GM12878 (cell line): ENCODE measurements at regions of chr5 and their contacts with region 1.

Region 1: DNA sequence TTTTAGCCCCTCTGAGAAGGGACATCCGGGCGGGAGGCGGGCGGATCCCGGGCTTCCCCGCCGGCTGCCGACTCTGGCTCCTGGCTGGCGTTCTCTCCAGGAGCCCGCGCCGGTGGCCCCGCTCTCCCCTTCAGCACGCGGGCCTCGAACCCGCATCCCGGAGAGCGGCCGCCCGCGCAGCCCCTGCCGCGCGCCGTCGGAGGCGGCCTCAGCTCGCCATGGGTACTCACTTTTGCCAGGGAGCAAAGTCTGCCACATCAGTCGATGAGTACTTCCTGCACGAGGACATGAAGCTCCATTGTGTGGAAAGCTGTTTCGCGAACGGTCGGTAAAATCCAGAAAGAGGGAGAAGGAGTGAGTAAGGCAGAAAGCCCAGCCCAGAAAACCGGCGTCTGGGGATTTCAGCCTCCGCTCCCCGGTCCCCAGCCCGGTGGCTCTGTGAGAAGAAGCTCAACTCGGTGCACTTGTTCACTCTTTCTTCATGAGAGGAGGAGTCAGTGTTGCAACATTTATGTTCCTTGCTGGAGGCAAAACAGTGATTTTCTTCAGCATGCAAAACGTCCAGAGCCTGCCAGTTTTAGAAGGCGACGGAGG is at the start of gene PRLR:
- DNase-seq: no peak
- ATAC-seq: peak; percentile 38
- H3K4me3 ChIP-seq: peak within 1 kb of the TSS; percentile 64
- H3K27ac ChIP-seq: peak within 1 kb of the TSS; percentile 25; the same call in 1 of the 2 replicates
- H3K4me1 ChIP-seq: no peaks in the 10 kb centered on the region
- H3K27me3 ChIP-seq: peaks cover 0 to 8% of the 10 kb centered on the region in 2 experiments; a peak in 2 of 4 replicates
- CTCF ChIP-seq: no peak
- EP300 ChIP-seq: no peak
- POLR2A ChIP-seq: no peak
- RAD21 ChIP-seq: no peak
- polyA plus RNA-seq, gene PRLR: 0.04 to 0.85 TPM

Region 2: GRCh38 chr5:35089334-35090314 is 140.5 kb before region 1 on chr5:
- CTCF ChIA-PET with region 1: interaction called, 10 read pairs
- POLR2A ChIA-PET with region 1: interaction called, 3 read pairs
- RAD21 ChIA-PET with region 1: interaction called, 4 read pairs
- SMC1A ChIA-PET with region 1: interaction called, 17 read pairs
- in situ Hi-C with region 1: no loop called
- intact Hi-C with region 1: no loop called
- DNase-seq: peak; percentile 28
- ATAC-seq: peak; percentile 92
- H3K4me3 ChIP-seq: no peak overlapping the region
- H3K27ac ChIP-seq: no peak overlapping the region
- H3K4me1 ChIP-seq: no peaks in the 10 kb centered on the region
- H3K27me3 ChIP-seq: no peaks in the 10 kb centered on the region
- CTCF ChIP-seq: peak; percentile 75 to 90 (median 78); a peak in 5 of 6 replicates
- EP300 ChIP-seq: no peak
- POLR2A ChIP-seq: no peak
- RAD21 ChIP-seq: peak; percentile 94

Region 3: GRCh38 chr5:35194635-35195471 is 35.3 kb before region 1 on chr5:
- CTCF ChIA-PET with region 1: interaction called, 10 read pairs
- POLR2A ChIA-PET with region 1: interaction called, 3 read pairs
- RAD21 ChIA-PET with region 1: interaction called, 4 read pairs
- SMC1A ChIA-PET with region 1: interaction called, 26 read pairs
- in situ Hi-C with region 1: no loop called
- intact Hi-C with region 1: no loop called
- DNase-seq: peak; percentile 36
- ATAC-seq: peak; percentile 96
- H3K4me3 ChIP-seq: peak overlapping the region; percentile 20; the same call in 1 of the 2 replicates
- H3K27ac ChIP-seq: peak overlapping the region; percentile 30; the same call in 1 of the 2 replicates
- H3K4me1 ChIP-seq: peaks cover 15% of the 10 kb centered on the region
- H3K27me3 ChIP-seq: no peaks in the 10 kb centered on the region
- CTCF ChIP-seq: no peak
- EP300 ChIP-seq: peak in 1 of 2 experiments; percentile 79; a peak in 2 of 4 replicates
- POLR2A ChIP-seq: no peak
- RAD21 ChIP-seq: no peak

Region 4: DNA sequence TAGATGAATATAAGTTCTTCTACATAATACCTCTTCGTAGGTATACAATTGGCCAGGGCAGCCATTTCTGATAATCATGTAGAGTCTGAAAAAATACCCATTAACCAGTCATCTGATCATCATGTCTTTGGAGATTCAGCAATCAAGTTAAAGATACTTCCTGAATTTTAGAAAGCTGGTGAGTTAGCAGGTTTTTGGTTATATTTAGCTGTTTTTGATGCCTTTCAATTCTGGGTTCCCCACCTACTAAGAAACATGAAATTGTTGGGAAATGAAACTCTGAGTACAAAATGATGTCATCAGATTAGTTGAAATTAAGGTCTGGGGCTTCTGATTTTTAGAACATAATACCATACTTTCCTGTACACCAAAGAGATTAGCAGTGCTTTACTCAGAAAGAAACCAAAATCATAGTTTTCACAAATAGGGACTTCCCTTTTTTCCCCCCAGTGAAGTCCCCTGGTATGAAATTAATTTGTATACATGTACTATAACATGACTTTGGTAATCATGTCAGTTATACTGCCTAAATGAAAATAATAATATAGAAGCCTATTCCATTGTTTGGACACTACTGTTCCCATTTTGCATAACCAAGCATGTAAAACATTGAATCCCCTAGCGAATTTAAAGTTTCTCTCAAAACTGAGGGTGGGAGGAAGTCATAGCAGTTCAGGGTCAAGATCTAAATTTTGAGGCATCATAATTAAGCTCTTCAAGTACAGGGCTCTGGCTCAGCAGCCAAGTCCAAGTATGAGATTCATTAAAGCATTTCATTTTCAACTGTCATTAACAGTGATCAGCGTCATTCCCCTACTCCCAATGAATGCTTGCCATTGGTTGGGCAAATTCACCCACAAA is 17.8 kb before region 1 on chr5:
- CTCF ChIA-PET with region 1: interaction called, 104 read pairs
- POLR2A ChIA-PET with region 1: interaction called, 49 read pairs
- RAD21 ChIA-PET with region 1: interaction called, 108 read pairs
- SMC1A ChIA-PET with region 1: interaction called, 224 read pairs
- in situ Hi-C with region 1: no loop called
- intact Hi-C with region 1: loop called (anchors 2 kb)
- DNase-seq: peak; percentile 71
- ATAC-seq: peak; percentile 85
- H3K4me3 ChIP-seq: no peak overlapping the region
- H3K27ac ChIP-seq: peak overlapping the region; percentile 22; the same call in 1 of the 2 replicates
- H3K4me1 ChIP-seq: peaks cover 12% of the 10 kb centered on the region; the same call in 1 of the 2 replicates
- H3K27me3 ChIP-seq: no peaks in the 10 kb centered on the region
- CTCF ChIP-seq: no peak
- EP300 ChIP-seq: peak; percentile 61 to 71; a peak in 2 of 4 replicates
- POLR2A ChIP-seq: no peak
- RAD21 ChIP-seq: no peak

Region 5: GRCh38 chr5:35302544-35302943 is 72.4 kb after region 1 on chr5:
- CTCF ChIA-PET with region 1: interaction called, 5 read pairs
- POLR2A ChIA-PET with region 1: interaction called, 3 read pairs
- RAD21 ChIA-PET with region 1: interaction called, 5 read pairs
- SMC1A ChIA-PET with region 1: interaction called, 11 read pairs
- in situ Hi-C with region 1: no loop called
- intact Hi-C with region 1: loop called (anchors 5 kb)
- DNase-seq: peak; percentile 92
- ATAC-seq: peak; percentile 93
- H3K4me3 ChIP-seq: no peak overlapping the region
- H3K27ac ChIP-seq: peak overlapping the region; percentile 13; the same call in 1 of the 2 replicates
- H3K4me1 ChIP-seq: no peaks in the 10 kb centered on the region; the same call in 1 of the 2 replicates
- H3K27me3 ChIP-seq: no peaks in the 10 kb centered on the region
- CTCF ChIP-seq: no peak
- EP300 ChIP-seq: peak; percentile 66 to 69; a peak in 2 of 4 replicates
- POLR2A ChIP-seq: no peak
- RAD21 ChIP-seq: no peak

Region 6: GRCh38 chr5:35319333-35320002 is 89.3 kb after region 1 on chr5:
- CTCF ChIA-PET with region 1: interaction called, 11 read pairs
- POLR2A ChIA-PET with region 1: interaction called, 8 read pairs
- RAD21 ChIA-PET with region 1: interaction called, 13 read pairs
- SMC1A ChIA-PET with region 1: interaction called, 57 read pairs
- in situ Hi-C with region 1: no loop called
- intact Hi-C with region 1: loop called (anchors 1 kb)
- DNase-seq: peak; percentile 96
- ATAC-seq: peak; percentile 91
- H3K4me3 ChIP-seq: no peak overlapping the region
- H3K27ac ChIP-seq: peak overlapping the region; percentile 66
- H3K4me1 ChIP-seq: peaks cover 11% of the 10 kb centered on the region
- H3K27me3 ChIP-seq: no peaks in the 10 kb centered on the region
- CTCF ChIP-seq: no peak
- EP300 ChIP-seq: peak; percentile 92 to 96
- POLR2A ChIP-seq: no peak
- RAD21 ChIP-seq: no peak

Region 7: DNA sequence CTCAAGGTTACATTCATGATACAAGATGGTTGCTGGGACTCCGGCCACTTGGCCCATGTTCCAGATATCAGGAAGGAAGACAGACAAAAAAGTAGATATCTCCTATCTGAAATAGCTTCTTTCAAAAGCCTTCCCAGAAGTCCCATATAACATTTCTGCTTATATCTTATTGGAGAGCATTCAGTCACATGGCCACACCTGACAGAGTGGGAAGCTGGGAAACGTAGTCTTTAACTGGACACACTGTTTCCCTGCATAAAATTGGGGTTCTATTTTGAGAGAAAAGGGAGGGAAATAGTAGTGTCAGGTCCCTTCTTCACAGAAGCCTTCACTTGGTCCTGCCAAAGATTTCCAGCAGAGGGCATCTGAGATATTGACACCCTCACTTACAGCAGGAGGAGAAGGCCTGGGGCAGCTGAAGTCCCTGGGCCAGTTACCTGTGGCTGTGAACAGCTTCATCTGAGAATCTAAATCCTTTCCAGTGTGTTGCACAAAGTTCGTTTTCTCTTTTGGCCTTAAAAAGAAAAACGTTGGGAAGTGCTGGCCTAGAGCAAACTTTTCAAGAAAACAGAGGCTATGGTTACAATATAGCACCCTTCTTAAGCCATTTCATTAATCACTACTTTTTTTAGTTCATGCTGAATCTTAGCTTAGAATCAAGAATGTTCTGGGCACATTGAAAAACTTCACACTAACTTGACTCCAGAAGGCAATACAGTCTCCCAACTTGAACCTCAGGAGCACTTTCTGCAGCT is 421.0 kb after region 1 on chr5:
- CTCF ChIA-PET with region 1: interaction called, 11 read pairs
- POLR2A ChIA-PET with region 1: no interaction called
- RAD21 ChIA-PET with region 1: no interaction called
- SMC1A ChIA-PET with region 1: no interaction called
- in situ Hi-C with region 1: no loop called
- intact Hi-C with region 1: no loop called
- DNase-seq: no peak
- ATAC-seq: peak; percentile 98
- H3K4me3 ChIP-seq: no peak overlapping the region
- H3K27ac ChIP-seq: no peak overlapping the region
- H3K4me1 ChIP-seq: no peaks in the 10 kb centered on the region
- H3K27me3 ChIP-seq: no peaks in the 10 kb centered on the region
- CTCF ChIP-seq: peak; percentile 45 to 57 (median 57); a peak in 4 of 6 replicates
- EP300 ChIP-seq: no peak
- POLR2A ChIP-seq: no peak
- RAD21 ChIP-seq: peak; percentile 56